CD4-positive, alpha-beta memory T cell (primary cell): ENCODE measurements at regions of chr2 and their contacts with region 1.

Region 1: GRCh38 chr2:11344342-11344955 is at the start of gene ROCK2:
- DNase-seq: peak; percentile 53 to 66 (median 62)
- H3K4me3 ChIP-seq: peak within 1 kb of the TSS; percentile 81 to 94
- H3K4me3 Mint-ChIP-seq: peak within 1 kb of the TSS; percentile 94 to 100 (median 98)
- H3K27ac ChIP-seq: peak within 1 kb of the TSS; percentile 53
- H3K27ac Mint-ChIP-seq: peak within 1 kb of the TSS; percentile 83 to 97 (median 95)
- H3K4me1 ChIP-seq: peaks cover 40% of the 10 kb centered on the region
- H3K4me1 Mint-ChIP-seq: peaks cover 25 to 45% (median 27%) of the 10 kb centered on the region in 4 donors
- H3K27me3 ChIP-seq: no peaks in the 10 kb centered on the region
- H3K27me3 Mint-ChIP-seq: no peaks in the 10 kb centered on the region
- total RNA-seq, gene ROCK2: 24.3 to 26.7 TPM

Region 2: GRCh38 chr2:9951272-9951972 is 1393.0 kb before region 1 on chr2 and contains the start of gene GRHL1:
- CTCF ChIA-PET with region 1: no interaction called
- POLR2A ChIA-PET with region 1: no interaction called
- intact Hi-C with region 1: loop called (anchors 5 kb)
- DNase-seq: peak; percentile 85 to 92 (median 91)
- H3K4me3 ChIP-seq: peak within 1 kb of the TSS in 1 of 2 donors; percentile 58
- H3K4me3 Mint-ChIP-seq: peak within 1 kb of the TSS; percentile 80 to 91 (median 88)
- H3K27ac ChIP-seq: peak within 1 kb of the TSS; percentile 51
- H3K27ac Mint-ChIP-seq: peak within 1 kb of the TSS; percentile 15 to 73 (median 61)
- H3K4me1 ChIP-seq: peaks cover 13% of the 10 kb centered on the region
- H3K4me1 Mint-ChIP-seq: peaks cover 0 to 5% (median 4%) of the 10 kb centered on the region in 4 donors
- H3K27me3 ChIP-seq: no peaks in the 10 kb centered on the region
- H3K27me3 Mint-ChIP-seq: peaks cover 7 to 16% of the 10 kb centered on the region in 2 donors
- total RNA-seq, gene GRHL1: 0.33 to 0.49 TPM

Region 3: GRCh38 chr2:11154923-11155380 is 189.5 kb before region 1 on chr2:
- CTCF ChIA-PET with region 1: no interaction called
- POLR2A ChIA-PET with region 1: interaction called, 24 read pairs
- intact Hi-C with region 1: loop called (anchors 1 kb)
- DNase-seq: peak; percentile 95 to 98 (median 97)
- H3K4me3 ChIP-seq: peak overlapping the region; percentile 38 to 66
- H3K4me3 Mint-ChIP-seq: peak overlapping the region; percentile 81 to 88 (median 85)
- H3K27ac ChIP-seq: peak overlapping the region; percentile 68
- H3K27ac Mint-ChIP-seq: peak overlapping the region; percentile 85 to 93 (median 88)
- H3K4me1 ChIP-seq: peaks cover 23% of the 10 kb centered on the region
- H3K4me1 Mint-ChIP-seq: peaks cover 4 to 28% (median 21%) of the 10 kb centered on the region in 4 donors
- H3K27me3 ChIP-seq: no peaks in the 10 kb centered on the region
- H3K27me3 Mint-ChIP-seq: no peaks in the 10 kb centered on the region

Region 4: GRCh38 chr2:11326677-11327211 is 17.7 kb before region 1 on chr2:
- CTCF ChIA-PET with region 1: interaction called, 4 read pairs
- POLR2A ChIA-PET with region 1: interaction called, 11 read pairs
- intact Hi-C with region 1: no loop called
- DNase-seq: no peak
- H3K4me3 ChIP-seq: no peak overlapping the region
- H3K4me3 Mint-ChIP-seq: no peak overlapping the region
- H3K27ac ChIP-seq: no peak overlapping the region
- H3K27ac Mint-ChIP-seq: no peak overlapping the region
- H3K4me1 ChIP-seq: peaks cover 8% of the 10 kb centered on the region
- H3K4me1 Mint-ChIP-seq: peaks cover 10 to 18% (median 15%) of the 10 kb centered on the region in 4 donors
- H3K27me3 ChIP-seq: no peaks in the 10 kb centered on the region
- H3K27me3 Mint-ChIP-seq: no peaks in the 10 kb centered on the region

Region 5: DNA sequence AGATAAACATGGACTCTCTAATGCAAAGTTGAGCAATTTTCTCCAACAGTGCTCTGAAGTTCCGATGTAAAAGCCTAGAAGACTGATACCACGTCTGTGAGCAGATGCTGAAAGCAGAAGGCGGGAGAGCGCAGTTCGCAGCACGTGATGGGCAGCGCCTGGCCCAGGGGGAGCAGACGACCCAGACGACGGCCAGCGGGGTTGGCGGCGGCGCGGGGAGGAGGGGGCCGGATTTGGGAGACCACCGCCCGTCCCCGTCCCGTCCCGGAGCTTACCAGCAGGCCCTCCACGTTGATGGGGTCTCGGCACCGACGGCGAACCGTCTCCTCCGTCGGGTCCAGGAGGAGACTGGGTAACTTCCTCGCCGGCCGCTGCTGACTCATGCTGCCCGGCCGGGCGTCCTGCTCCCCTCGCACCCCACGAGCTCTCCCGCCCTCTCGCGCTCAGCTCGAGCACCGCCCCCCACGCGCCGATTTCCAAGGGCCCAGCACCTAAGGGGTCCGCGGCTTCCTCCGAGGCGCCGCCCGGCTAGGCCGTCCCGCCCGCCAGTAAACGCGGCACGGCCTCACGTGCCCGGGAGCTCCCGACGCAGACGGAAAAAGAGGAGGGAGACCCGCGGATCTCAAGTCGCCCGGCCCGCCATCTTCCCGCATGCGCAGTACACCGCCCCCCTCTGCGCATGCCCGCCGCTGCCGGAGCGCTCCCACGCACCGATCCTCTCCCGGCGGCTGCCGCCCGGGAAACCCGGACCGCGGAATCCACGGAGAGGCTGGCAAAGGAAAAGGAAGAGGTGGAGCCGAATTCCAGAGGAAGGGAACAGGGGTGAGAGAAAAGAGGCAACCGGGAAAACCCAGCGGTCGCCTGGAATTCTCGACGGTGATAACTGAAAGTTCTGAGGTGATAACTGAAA is 121.3 kb after region 1 on chr2 and contains the start of gene E2F6:
- CTCF ChIA-PET with region 1: no interaction called
- POLR2A ChIA-PET with region 1: interaction called, 9 read pairs
- intact Hi-C with region 1: loop called (anchors 5 kb)
- DNase-seq: peak; percentile 81 to 88 (median 85)
- H3K4me3 ChIP-seq: peak within 1 kb of the TSS; percentile 61 to 65
- H3K4me3 Mint-ChIP-seq: peak within 1 kb of the TSS; percentile 92 to 98 (median 95)
- H3K27ac ChIP-seq: peak within 1 kb of the TSS; percentile 64
- H3K27ac Mint-ChIP-seq: peak within 1 kb of the TSS; percentile 73 to 97 (median 93)
- H3K4me1 ChIP-seq: peaks cover 28% of the 10 kb centered on the region
- H3K4me1 Mint-ChIP-seq: peaks cover 28 to 50% (median 36%) of the 10 kb centered on the region in 4 donors
- H3K27me3 ChIP-seq: no peaks in the 10 kb centered on the region
- H3K27me3 Mint-ChIP-seq: no peaks in the 10 kb centered on the region
- total RNA-seq, gene E2F6: 8.0 to 8.5 TPM

Region 6: DNA sequence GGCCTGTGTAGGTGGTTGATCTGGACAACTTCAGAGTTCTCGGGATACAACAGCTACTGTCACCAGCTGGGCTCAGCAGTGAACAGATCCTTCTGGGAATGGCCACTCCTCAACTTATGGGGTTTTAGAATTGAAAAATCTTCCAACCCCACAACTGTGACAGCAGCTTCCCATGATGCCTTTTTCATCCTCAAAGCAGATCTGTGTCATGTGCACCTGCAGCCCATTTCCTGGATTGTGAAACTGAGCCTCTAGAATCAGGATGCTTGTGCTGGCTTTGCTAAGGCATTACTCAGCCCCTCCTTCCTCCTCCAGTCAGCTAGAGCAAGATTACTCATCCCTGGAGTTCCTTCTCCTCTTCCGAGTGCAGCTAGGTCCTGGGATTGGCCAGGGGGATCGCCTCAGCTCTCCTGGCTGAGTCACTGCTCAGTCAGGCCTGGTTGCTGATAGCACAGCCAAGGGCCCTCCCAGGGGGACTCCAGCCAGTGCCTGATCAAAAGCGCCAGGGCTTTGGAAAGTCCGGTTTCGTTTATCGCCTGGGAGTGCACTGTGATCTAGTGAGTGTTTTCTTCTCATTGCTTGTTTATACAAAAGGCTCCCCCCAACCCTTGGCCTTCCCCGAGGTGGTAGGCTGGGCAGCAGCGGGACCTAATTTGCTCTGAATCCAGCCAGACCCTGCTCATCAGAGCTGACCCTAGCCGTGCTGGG is 399.6 kb after region 1 on chr2:
- CTCF ChIA-PET with region 1: no interaction called
- POLR2A ChIA-PET with region 1: no interaction called
- intact Hi-C with region 1: loop called (anchors 10 kb)
- DNase-seq: peak; percentile 59 to 91 (median 65)
- H3K4me3 ChIP-seq: peak overlapping the region; percentile 45 to 61
- H3K4me3 Mint-ChIP-seq: peak overlapping the region; percentile 49 to 92 (median 81)
- H3K27ac ChIP-seq: peak overlapping the region; percentile 48
- H3K27ac Mint-ChIP-seq: peak overlapping the region; percentile 71 to 98 (median 94)
- H3K4me1 ChIP-seq: peaks cover 56% of the 10 kb centered on the region
- H3K4me1 Mint-ChIP-seq: peaks cover 37 to 55% (median 44%) of the 10 kb centered on the region in 4 donors
- H3K27me3 ChIP-seq: no peaks in the 10 kb centered on the region
- H3K27me3 Mint-ChIP-seq: no peaks in the 10 kb centered on the region